ENCODE measurements at regions of chr17 and their contacts with region 1.

Region 1: GRCh38 chr17:57243171-57243948 is 13.0 kb upstream of the MSI2 start:
- DNase-seq: peak; percentile 41 to 88 (median 68)
- ATAC-seq: peak; percentile 78 to 88 (median 85)
- H3K4me3 ChIP-seq: no peak overlapping the region
- H3K4me3 Mint-ChIP-seq: no peak overlapping the region
- H3K27ac ChIP-seq: no peak overlapping the region
- H3K27ac Mint-ChIP-seq: peak overlapping the region in 1 of 2 donors; percentile 40
- H3K4me1 ChIP-seq: peaks cover 0 to 3% of the 10 kb centered on the region in 2 experiments
- H3K4me1 Mint-ChIP-seq: peaks cover 0 to 8% (median 0%) of the 10 kb centered on the region in 3 donors
- H3K27me3 ChIP-seq: peaks cover 0 to 10% of the 10 kb centered on the region in 2 experiments
- H3K27me3 Mint-ChIP-seq: peaks cover 0 to 7% of the 10 kb centered on the region in 2 donors

Region 2: DNA sequence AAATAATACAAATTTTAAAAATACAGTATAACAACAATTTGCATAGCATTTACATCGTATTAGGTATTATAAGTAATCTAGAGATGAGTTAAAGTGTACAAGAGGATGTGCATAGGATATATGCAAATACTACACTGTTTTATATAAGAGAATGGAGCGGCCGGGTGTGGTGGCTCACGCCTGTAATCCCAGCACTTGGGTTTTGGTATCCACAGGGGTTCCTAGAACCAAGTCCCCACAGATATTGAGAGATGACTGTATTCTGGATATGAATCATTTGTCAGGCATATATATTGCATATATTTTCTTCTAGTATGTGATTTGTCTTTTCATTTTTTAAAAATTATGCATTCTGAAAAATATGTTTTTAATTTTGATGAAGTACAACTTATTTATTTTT is 64.5 kb before region 1 on chr17:
- CTCF ChIA-PET with region 1: no interaction called
- POLR2A ChIA-PET with region 1: no interaction called
- DNase-seq: no peak
- ATAC-seq: no peak
- H3K4me3 ChIP-seq: no peak overlapping the region
- H3K4me3 Mint-ChIP-seq: no peak overlapping the region
- H3K27ac ChIP-seq: no peak overlapping the region
- H3K27ac Mint-ChIP-seq: no peak overlapping the region
- H3K4me1 ChIP-seq: no peaks in the 10 kb centered on the region
- H3K4me1 Mint-ChIP-seq: no peaks in the 10 kb centered on the region
- H3K27me3 ChIP-seq: peaks cover 0 to 8% of the 10 kb centered on the region in 2 experiments
- H3K27me3 Mint-ChIP-seq: peaks cover 5 to 21% of the 10 kb centered on the region in 2 donors

Region 3: DNA sequence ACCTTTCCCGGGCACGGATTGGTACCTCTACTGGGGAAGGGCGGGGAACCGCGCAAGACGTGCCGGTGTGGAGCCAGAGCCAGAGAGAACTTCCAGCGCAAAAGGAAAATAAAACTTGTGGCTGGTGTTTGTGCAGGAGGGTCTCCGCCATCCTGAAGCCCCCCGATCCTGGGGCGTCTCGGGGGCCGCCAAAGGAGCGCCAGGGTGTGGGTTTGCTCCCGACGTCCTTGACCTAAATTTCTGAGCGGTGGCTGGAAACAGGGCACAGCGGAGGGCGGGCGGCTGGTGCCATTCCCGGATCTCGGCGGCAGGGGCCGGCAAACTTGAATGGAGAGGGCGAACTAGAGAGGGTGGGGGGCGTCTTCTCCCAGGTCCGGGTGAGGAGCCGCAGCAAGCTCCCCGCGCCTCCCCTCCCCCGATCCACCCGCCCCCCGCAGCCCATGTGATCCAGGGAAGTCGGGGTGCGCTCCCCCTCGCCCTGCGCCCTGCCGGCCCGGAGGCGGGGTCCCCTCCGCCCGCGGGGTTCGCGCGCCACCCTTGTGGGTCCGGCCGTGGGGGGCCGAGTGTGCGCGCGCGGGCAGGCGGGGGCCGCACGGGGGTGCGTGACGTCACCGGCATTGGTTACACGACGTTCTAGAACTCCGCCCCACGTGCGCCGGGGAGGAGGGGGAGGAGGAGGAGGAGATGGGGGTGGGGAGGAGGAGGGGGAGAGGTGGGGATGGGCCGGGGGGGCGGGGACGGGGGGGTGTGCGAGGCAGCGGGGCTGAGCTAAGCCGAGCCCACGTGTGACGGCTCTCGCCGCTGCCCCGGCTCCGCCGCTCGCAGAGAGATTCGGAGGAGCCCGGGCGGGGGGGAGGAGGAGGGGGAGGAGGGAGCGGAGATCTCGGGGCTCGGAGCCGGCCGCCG is 12.7 kb after region 1 on chr17 and contains the start of gene MSI2:
- CTCF ChIA-PET with region 1: interaction called, 11 to 35 read pairs
- POLR2A ChIA-PET with region 1: no interaction called
- DNase-seq: peak; percentile 73 to 95 (median 88)
- ATAC-seq: peak; percentile 80 to 81 (median 80)
- H3K4me3 ChIP-seq: peak within 1 kb of the TSS; percentile 67 to 86
- H3K4me3 Mint-ChIP-seq: peak within 1 kb of the TSS; percentile 91 to 98 (median 92)
- H3K27ac ChIP-seq: peak within 1 kb of the TSS; percentile 75
- H3K27ac Mint-ChIP-seq: peak within 1 kb of the TSS; percentile 88 to 89
- H3K4me1 ChIP-seq: peaks cover 19 to 29% of the 10 kb centered on the region in 2 experiments
- H3K4me1 Mint-ChIP-seq: peaks cover 45 to 50% (median 46%) of the 10 kb centered on the region in 3 donors
- H3K27me3 ChIP-seq: no peaks in the 10 kb centered on the region
- H3K27me3 Mint-ChIP-seq: no peaks in the 10 kb centered on the region
- total RNA-seq, gene MSI2: 98.6 to 148 (median 113) TPM

Region 4: DNA sequence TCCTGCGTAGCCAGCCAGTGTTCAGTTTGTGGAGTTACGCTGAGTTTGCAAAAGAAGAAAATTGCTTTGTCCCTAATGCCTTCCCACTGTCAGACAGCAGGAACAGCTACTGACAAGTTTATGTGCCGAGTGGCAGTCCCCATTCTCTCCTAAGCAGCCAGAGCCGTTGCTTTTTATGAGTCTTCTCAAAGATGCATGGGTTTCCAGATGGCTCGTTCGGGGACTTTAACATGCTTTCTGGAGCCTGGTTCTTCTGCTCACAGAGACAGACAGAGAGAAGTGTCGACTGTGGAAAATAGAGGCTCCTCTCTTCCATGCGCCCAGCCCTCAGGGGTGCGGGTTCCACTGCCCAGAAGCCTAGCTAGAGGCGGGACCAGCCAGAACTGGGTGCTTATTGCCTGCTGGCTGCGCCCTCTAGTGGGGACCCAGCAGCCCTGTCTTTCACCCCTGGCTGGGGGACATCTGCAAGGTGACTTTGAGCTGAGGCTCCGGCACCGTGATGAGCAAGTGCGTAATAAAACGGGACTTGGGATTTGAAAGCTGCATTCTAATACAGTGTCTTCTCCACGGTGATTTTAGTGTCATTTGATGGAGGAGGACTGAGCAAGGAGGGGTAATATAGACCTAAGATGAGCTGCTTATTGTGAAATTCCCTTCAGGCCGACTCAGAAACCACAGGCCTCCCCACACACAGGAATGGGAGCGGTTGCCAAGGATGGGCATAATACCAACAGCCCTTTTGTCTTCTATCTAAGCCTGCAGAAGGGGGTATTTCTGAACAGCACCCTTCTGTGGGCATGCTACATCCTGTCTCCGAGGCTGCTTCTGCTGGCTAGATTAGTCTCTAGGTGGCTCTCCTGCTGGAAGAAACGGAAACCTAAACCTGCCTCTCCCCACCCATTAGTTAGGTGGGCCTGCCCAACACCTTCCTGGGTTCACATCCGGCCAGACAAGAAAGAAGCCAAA is 428.6 kb after region 1 on chr17:
- CTCF ChIA-PET with region 1: interaction called, 5 to 30 read pairs
- POLR2A ChIA-PET with region 1: no interaction called
- DNase-seq: peak; percentile 33 to 80 (median 60)
- ATAC-seq: peak; percentile 79 to 87 (median 81)
- H3K4me3 ChIP-seq: no peak overlapping the region
- H3K4me3 Mint-ChIP-seq: peak overlapping the region in 2 of 3 donors; percentile 37 to 39
- H3K27ac ChIP-seq: peak overlapping the region; percentile 47
- H3K27ac Mint-ChIP-seq: peak overlapping the region; percentile 83 to 84
- H3K4me1 ChIP-seq: peaks cover 3 to 29% of the 10 kb centered on the region in 2 experiments
- H3K4me1 Mint-ChIP-seq: peaks cover 20 to 37% (median 36%) of the 10 kb centered on the region in 3 donors
- H3K27me3 ChIP-seq: no peaks in the 10 kb centered on the region
- H3K27me3 Mint-ChIP-seq: no peaks in the 10 kb centered on the region

Region 5: DNA sequence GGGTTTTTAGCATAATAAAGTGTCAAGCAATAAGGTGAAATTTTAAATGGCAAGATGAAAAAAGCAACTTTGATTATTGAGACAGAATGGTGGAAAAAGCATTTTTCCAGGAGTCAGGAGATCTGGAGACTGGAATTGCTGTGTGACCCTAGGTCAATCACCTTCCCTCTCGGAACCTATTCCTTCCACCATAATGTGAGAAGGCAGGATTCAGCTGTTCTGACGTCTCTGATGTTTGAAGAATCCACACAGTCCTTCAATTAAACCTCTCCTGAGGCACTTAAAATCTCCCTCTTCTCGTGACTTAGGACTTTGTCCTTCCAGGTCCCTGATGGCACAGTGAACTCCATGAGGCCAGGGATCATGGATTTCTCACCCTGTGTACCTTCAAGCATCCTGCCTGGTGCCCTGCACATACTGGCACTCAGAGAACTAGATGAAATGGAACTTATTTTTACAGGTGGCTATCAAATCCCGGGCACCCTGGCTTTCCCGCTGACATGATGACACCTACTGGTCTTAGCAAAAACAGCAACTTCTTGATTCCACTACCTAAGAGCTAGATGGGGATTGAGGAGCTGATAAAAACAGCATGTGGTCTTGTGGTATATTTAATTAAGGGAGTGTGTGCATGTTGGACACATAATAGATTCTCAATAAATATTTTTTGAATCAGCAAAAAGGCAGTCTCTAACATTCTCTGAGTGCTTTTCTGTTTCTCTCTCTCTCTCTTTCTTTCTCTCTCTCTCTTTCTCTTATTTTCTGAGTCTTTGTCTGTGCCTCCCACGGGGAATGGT is 504.1 kb after region 1 on chr17:
- CTCF ChIA-PET with region 1: interaction called, 8 to 41 read pairs
- POLR2A ChIA-PET with region 1: interaction called in 1 of 2 experiments, 3 read pairs
- DNase-seq: peak in 28 of 35 experiments; percentile 2 to 75 (median 25)
- ATAC-seq: peak; percentile 59 to 75 (median 66)
- H3K4me3 ChIP-seq: no peak overlapping the region
- H3K4me3 Mint-ChIP-seq: no peak overlapping the region
- H3K27ac ChIP-seq: no peak overlapping the region
- H3K27ac Mint-ChIP-seq: no peak overlapping the region
- H3K4me1 ChIP-seq: no peaks in the 10 kb centered on the region
- H3K4me1 Mint-ChIP-seq: peaks cover 5 to 6% (median 5%) of the 10 kb centered on the region in 3 donors
- H3K27me3 ChIP-seq: peaks cover 0 to 5% of the 10 kb centered on the region in 2 experiments
- H3K27me3 Mint-ChIP-seq: peaks cover 0 to 4% of the 10 kb centered on the region in 2 donors

Region 6: DNA sequence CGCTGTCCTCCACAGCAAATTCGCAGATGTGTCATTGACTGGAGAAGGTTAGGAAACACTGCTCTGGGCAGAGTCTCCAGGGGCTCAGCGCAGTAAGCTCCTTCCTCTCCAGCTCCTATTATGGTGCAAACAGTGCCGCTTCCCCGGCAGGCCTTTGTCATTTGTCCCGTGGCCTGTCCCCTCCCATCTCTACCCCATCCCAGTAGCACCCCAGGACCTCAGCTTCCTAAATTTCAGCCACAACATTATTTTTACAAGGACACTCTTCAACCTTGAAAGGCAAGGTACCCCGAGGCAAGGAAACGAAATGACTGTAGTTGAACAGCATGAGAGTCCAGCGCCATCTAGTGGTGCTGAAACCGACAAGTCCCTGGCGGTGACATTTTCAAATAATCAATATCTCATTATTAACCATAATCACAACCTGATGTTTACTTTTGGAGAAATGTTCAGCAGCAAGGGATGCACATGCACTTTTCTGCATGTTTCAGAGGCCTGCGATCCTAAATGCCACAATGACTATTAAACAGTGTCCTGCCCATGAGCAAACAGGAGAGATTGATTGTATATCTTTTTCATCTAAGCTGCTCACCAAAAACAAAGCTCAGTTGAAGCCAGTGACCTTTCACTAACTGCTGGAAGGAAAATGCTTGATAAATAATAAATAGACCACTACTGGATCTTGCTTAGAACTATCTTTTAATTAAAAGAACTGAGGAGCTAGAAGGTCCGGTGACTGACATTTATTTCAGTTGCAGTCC is 590.0 kb after region 1 on chr17:
- CTCF ChIA-PET with region 1: interaction called, 4 to 10 read pairs
- POLR2A ChIA-PET with region 1: no interaction called
- DNase-seq: peak; percentile 12 to 87 (median 60)
- ATAC-seq: peak; percentile 80 to 86 (median 81)
- H3K4me3 ChIP-seq: peak overlapping the region; percentile 24 to 68
- H3K4me3 Mint-ChIP-seq: no peak overlapping the region
- H3K27ac ChIP-seq: no peak overlapping the region
- H3K27ac Mint-ChIP-seq: no peak overlapping the region
- H3K4me1 ChIP-seq: peaks cover 0 to 13% of the 10 kb centered on the region in 2 experiments
- H3K4me1 Mint-ChIP-seq: peaks cover 5 to 6% (median 6%) of the 10 kb centered on the region in 3 donors
- H3K27me3 ChIP-seq: no peaks in the 10 kb centered on the region
- H3K27me3 Mint-ChIP-seq: no peaks in the 10 kb centered on the region

Measured in T-cell (primary cell).